ENCODE measurements at regions of chr12 and their contacts with region 1.

Region 1: DNA sequence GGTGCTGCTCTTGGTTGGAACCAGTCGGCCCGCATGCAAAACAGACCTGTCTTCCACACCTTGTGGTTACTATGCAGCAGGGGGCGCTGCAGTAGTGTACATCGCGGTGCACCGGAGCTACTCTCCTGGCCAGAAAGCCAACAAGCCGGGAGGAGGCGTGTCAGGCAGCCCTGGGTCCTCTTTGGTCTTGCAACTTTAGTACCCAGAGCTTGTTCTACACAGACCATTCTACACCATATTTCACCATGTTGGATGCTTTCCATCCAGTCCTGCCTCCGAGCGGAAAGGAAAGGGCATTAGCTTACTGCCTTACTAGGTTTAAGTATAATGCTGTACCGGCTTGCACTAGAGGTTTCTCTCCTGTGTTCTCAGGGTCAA is 927 bp upstream of the TMTC2 start:
- DNase-seq: peak; percentile 95
- H3K4me3 ChIP-seq: peak overlapping the region; percentile 69
- H3K27ac ChIP-seq: peak overlapping the region; percentile 54
- H3K4me1 ChIP-seq: peaks cover 20% of the 10 kb centered on the region
- H3K27me3 ChIP-seq: no peaks in the 10 kb centered on the region
- CTCF ChIP-seq: peak; percentile 91

Region 2: DNA sequence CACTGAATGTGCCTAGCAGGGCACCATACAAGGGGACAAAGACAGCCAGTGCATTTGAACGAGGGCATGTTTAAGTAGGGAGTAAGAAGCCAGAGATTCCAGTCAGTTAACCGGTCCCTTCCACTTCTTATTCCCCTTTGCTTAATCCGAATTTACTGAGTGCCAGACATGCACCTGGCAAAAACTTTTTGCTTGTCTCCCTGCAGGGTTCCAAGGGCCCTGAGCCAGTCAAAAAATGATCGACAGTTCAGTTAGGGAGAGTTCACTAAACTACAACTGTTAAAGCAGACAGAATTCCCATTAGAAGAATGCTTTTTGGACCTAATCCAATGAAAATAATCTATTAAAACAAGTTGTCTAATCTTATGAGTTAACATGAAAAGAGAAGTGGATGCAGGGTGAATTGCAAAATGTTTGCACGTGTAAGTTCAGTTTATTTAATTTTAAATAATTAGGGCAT is 194.7 kb after region 1 on chr12:
- CTCF ChIA-PET with region 1: interaction called, 3 read pairs
- POLR2A ChIA-PET with region 1: no interaction called
- intact Hi-C with region 1: loop called (anchors 10 kb)
- DNase-seq: peak; percentile 14
- H3K4me3 ChIP-seq: no peak overlapping the region
- H3K27ac ChIP-seq: no peak overlapping the region
- H3K4me1 ChIP-seq: peaks cover 24% of the 10 kb centered on the region
- H3K27me3 ChIP-seq: no peaks in the 10 kb centered on the region
- CTCF ChIP-seq: no peak

Region 3: GRCh38 chr12:82966001-82966559 is 280.3 kb after region 1 on chr12:
- CTCF ChIA-PET with region 1: interaction called, 3 read pairs
- POLR2A ChIA-PET with region 1: no interaction called
- intact Hi-C with region 1: loop called (anchors 5 kb)
- DNase-seq: peak; percentile 95
- H3K4me3 ChIP-seq: no peak overlapping the region
- H3K27ac ChIP-seq: peak overlapping the region; percentile 60
- H3K4me1 ChIP-seq: peaks cover 66% of the 10 kb centered on the region
- H3K27me3 ChIP-seq: no peaks in the 10 kb centered on the region
- CTCF ChIP-seq: no peak

Region 4: GRCh38 chr12:83005534-83006197 is 319.9 kb after region 1 on chr12:
- CTCF ChIA-PET with region 1: interaction called, 3 read pairs
- POLR2A ChIA-PET with region 1: no interaction called
- intact Hi-C with region 1: loop called (anchors 5 kb)
- DNase-seq: no peak
- H3K4me3 ChIP-seq: no peak overlapping the region
- H3K27ac ChIP-seq: no peak overlapping the region
- H3K4me1 ChIP-seq: no peaks in the 10 kb centered on the region
- H3K27me3 ChIP-seq: no peaks in the 10 kb centered on the region
- CTCF ChIP-seq: no peak

Region 5: GRCh38 chr12:83434600-83434999 is 748.8 kb after region 1 on chr12:
- CTCF ChIA-PET with region 1: no interaction called
- POLR2A ChIA-PET with region 1: no interaction called
- intact Hi-C with region 1: loop called (anchors 5 kb)
- DNase-seq: peak; percentile 27
- H3K4me3 ChIP-seq: no peak overlapping the region
- H3K27ac ChIP-seq: no peak overlapping the region
- H3K4me1 ChIP-seq: no peaks in the 10 kb centered on the region
- H3K27me3 ChIP-seq: no peaks in the 10 kb centered on the region
- CTCF ChIP-seq: no peak; the same call in 1 of the 2 replicates

Region 6: DNA sequence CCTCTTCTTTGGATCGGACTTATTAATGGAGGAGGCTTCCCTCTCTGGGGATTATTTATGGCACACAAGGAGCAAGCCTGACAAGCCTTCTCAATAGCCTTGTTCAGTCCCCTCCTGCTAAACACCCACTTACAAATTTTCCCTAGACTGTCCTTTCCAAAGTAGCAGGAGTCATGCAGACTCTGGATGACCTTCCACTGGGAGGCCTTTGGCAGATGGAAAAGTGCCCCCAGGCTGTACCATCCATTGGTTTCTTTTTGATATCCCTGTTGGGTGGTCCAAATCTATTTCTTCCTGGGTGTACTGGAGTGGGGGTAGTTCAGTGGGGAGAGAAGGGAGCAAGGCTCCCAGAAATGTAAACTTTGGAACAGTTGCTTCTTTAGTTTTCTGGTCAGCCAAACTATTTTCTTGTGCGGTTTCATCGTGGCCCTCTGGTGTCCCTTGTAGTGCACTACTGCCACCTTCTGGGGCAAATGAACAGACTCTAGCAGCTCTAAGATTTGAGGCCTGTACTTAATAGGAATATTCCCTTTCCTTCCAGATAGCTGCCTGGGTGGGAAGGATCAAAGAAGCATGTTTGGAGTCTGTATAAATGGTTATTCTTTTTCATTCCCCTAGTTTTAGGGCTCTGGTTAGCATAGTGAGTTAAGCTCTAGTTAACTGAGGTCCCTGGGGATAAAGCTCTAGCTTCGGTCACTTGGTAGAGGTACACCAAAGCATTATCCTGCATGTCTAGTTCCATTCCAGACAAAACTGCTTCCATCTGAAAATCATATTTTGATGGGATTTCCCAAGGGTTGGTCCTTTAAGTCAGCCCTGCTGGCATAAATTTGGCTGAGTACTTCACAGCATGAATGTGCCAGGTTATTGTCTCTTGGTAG is 1817.4 kb after region 1 on chr12:
- CTCF ChIA-PET with region 1: interaction called, 6 read pairs
- POLR2A ChIA-PET with region 1: no interaction called
- intact Hi-C with region 1: loop called (anchors 5 kb)
- DNase-seq: peak; percentile 74
- H3K4me3 ChIP-seq: no peak overlapping the region
- H3K27ac ChIP-seq: no peak overlapping the region
- H3K4me1 ChIP-seq: peaks cover under 1% of the 10 kb centered on the region
- H3K27me3 ChIP-seq: no peaks in the 10 kb centered on the region
- CTCF ChIP-seq: peak; percentile 76

Measured in A673 (cell line).